ENCODE measurements at regions of chr17 and their contacts with region 1.

Region 1: DNA sequence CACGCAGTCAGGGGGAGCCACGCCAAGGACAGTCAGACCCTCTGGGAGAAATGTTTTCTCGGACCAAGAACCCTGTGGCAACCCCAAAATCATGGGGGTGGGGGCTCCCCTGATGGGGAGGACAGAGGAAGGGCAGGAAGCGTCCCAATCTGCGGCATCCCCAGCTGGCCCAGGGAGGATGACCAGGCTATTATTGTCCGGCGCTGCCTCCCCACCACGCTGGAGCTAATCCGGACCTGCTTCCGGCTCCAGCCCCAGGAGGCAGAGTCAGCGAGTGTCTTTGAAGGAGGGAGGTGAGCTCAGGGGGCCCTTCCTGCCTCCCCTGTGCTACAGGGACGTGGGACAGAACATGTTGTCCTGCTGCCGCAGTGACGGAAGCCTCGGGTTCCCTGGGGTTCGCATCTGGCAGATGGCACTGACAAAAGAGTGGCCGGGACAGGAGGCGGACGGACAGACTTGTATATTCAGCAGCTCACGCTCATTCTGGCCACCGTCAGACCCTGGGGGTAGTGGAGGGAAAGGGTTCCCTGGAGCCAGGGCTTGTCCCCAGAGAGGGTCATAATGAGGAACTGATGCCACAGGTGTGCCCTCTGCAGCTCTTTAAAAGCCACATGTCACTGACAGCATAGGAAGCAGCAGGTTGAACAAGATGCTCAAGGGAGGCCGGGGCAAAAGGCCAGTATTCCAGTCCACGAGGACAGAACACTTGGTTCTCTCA is 54.3 kb upstream of the CDC42EP4 start:
- DNase-seq: no peak
- ATAC-seq: peak; percentile 34 to 47
- H3K4me3 ChIP-seq: no peak overlapping the region
- H3K27ac ChIP-seq: peak overlapping the region; percentile 60
- H3K4me1 ChIP-seq: peaks cover 15% of the 10 kb centered on the region
- H3K27me3 ChIP-seq: no peaks in the 10 kb centered on the region
- CTCF ChIP-seq: no peak

Region 2: DNA sequence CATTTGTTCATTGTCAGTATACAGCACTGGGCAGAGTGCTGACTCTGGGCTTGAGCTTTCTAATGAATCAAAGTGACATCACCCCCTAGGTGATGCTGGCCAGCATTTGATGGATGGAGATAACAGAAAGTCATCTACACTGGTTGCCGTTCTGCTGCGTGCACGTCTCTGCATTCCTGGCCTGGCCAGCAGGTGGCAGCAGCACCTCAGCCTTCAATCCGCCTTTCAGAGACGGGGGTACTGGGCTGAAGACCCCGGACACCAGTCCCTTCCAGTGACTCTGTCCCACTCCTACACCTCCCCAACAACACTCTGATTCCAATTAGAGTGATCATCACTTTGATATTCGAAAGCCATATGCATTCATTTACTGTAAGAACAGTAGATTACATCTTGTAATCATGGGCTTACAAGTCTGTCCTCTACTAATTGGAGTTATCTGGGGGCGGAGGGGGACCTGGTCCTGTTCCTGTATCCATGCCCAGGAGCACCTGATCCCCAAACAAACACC is 110.3 kb before region 1 on chr17:
- intact Hi-C with region 1: loop called (anchors 5 kb)
- DNase-seq: peak; percentile 66
- ATAC-seq: peak; percentile 69 to 76
- H3K4me3 ChIP-seq: no peak overlapping the region
- H3K27ac ChIP-seq: no peak overlapping the region
- H3K4me1 ChIP-seq: no peaks in the 10 kb centered on the region
- H3K27me3 ChIP-seq: no peaks in the 10 kb centered on the region
- CTCF ChIP-seq: peak; percentile 99

Region 3: GRCh38 chr17:73436954-73437353 is 70.9 kb after region 1 on chr17:
- intact Hi-C with region 1: no loop called
- DNase-seq: no peak
- ATAC-seq: no peak
- H3K4me3 ChIP-seq: no peak overlapping the region
- H3K27ac ChIP-seq: no peak overlapping the region
- H3K4me1 ChIP-seq: no peaks in the 10 kb centered on the region
- H3K27me3 ChIP-seq: peaks cover 4% of the 10 kb centered on the region
- CTCF ChIP-seq: no peak